Activated CD8-positive, alpha-beta T cell treated with anti-CD3 and anti-CD28 coated beads for 36 hours (primary cell): ENCODE measurements at regions of chr2 and their contacts with region 1.

Region 1: DNA sequence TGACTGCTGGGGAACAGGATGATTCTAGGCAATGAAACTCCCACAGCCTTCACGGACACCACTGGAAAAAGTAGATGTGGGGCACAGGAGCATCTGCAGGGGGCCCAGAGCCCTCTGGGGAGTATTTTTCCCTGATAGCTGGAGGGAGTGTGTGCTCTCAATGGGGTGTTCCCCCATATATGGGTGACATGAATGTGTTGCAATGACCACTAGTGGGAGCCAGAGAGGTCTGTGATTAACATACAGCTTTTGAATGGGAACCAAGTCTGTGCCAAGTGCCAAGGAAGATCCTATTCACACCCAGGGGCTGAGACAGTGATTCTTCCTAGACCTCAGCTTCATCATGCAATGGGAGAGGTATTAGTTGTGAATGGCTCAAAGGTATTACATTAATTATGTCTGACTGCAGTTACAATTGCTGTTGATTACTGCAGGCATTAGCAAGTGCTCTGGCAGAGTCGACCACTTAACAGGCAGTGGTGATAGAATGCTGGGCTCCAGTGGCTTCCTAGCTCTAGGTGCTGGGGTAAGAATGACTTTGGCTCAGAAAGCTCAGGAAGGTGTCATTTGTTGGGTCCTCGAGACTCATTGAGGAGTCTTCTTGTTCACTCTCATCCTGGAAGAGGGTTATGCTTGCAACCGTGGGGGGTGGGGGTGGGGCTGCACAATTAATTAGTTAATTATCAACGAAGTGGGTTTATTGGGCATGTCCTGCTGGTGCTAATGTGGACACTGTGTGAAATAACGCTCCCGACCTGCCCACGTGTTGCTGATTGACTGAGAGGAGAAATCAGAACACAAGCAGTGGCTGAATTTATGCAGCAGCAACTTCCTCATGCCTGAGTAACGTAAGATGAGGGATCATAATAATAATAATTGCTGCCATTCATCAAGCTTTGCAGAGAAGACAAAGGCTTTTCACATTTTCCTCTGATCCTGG is 194.1 kb downstream of the CLIP4 start:
- DNase-seq: peak; percentile 62
- ATAC-seq: peak; percentile 76
- H3K4me3 Mint-ChIP-seq: no peak overlapping the region
- H3K27ac Mint-ChIP-seq: no peak overlapping the region
- H3K4me1 Mint-ChIP-seq: peaks cover 11% of the 10 kb centered on the region
- H3K27me3 Mint-ChIP-seq: peaks cover 31% of the 10 kb centered on the region
- CTCF ChIP-seq: peak; percentile 60

Region 2: GRCh38 chr2:29187926-29188325 is 121.4 kb before region 1 on chr2:
- CTCF ChIA-PET with region 1: no interaction called
- POLR2A ChIA-PET with region 1: no interaction called
- intact Hi-C with region 1: no loop called
- DNase-seq: no peak
- ATAC-seq: no peak
- H3K4me3 Mint-ChIP-seq: no peak overlapping the region
- H3K27ac Mint-ChIP-seq: no peak overlapping the region
- H3K4me1 Mint-ChIP-seq: peaks cover 9% of the 10 kb centered on the region
- H3K27me3 Mint-ChIP-seq: no peaks in the 10 kb centered on the region
- CTCF ChIP-seq: no peak

Region 3: DNA sequence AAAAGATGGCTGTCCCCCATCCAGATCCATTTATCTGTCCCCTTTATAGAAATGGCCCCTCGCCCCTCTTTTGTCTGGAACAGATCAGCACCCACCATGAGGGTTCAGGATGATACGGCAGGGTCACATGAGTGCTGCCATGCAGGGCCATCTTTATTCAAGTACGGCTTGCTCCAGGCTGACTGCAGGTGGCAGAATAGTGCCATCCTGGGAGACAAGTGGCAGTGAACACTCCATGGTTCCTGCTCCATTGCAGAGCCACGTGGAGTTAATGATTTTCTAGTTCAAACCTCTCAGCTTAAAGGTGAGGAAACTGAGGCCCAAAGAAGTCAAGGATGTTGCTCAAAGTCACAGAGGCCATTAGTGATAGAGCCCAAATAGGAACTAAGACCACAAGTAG is 13.5 kb before region 1 on chr2:
- CTCF ChIA-PET with region 1: interaction called, 18 read pairs
- POLR2A ChIA-PET with region 1: no interaction called
- intact Hi-C with region 1: no loop called
- DNase-seq: peak; percentile 15
- ATAC-seq: no peak
- H3K4me3 Mint-ChIP-seq: no peak overlapping the region
- H3K27ac Mint-ChIP-seq: no peak overlapping the region
- H3K4me1 Mint-ChIP-seq: no peaks in the 10 kb centered on the region
- H3K27me3 Mint-ChIP-seq: peaks cover 20% of the 10 kb centered on the region
- CTCF ChIP-seq: peak; percentile 40

Region 4: DNA sequence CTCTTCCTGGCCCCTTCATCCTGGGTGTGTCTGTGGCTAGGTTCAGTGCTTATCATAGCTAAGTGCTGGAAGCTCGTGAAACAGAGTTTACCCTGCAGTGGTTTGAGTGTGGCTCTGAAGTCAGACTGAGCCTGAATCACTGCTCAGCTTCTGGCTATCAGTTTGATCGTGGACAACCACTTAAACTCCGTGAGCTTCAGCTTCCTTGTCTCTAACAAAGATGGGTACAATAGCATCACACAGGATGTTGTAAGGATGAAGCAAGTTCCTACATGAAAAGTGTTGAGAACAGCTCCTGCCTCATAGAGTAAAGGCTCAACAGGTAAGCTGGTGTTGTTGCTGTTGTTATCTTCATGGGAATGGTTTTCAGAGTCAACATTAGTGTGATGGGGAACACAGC is 16.2 kb after region 1 on chr2:
- CTCF ChIA-PET with region 1: interaction called, 15 read pairs
- POLR2A ChIA-PET with region 1: no interaction called
- intact Hi-C with region 1: no loop called
- DNase-seq: no peak
- ATAC-seq: no peak
- H3K4me3 Mint-ChIP-seq: no peak overlapping the region
- H3K27ac Mint-ChIP-seq: no peak overlapping the region
- H3K4me1 Mint-ChIP-seq: peaks cover 7% of the 10 kb centered on the region
- H3K27me3 Mint-ChIP-seq: peaks cover 5% of the 10 kb centered on the region
- CTCF ChIP-seq: no peak